ENCODE measurements at regions of chr5 and their contacts with region 1.

Region 1: DNA sequence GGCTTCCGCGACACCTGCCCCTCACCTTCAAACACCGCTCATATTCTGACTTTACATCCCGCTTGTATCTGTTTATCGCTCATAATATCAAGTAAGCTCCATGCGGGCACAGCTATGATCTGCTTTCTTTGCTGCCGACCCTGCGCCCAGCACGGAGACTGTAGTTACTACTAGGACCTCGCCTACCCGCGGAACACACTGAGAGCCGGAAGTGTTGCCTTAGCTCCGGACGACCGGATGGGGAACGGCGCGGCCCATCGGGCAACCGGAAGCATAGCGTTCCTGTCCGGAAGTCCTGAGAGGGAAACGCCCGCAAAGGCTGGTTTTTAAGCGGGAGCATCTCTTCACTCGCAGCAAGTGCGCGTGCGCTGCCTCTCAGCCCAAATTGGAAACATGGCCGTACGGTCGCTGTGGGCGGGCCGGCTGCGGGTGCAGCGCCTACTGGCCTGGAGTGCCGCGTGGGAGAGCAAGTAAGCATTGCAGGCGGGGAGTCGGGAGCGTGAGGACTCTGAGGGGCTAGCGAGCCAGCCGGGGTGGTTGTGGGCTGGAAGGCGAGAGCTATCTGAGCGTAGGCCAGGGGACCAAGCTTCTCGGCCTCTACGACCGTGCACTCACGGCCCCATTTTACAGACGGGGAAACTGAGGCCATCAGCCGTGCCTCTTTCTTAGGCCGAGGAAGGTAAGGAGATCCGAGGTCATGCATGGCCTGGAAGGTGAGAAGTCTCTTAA is at the start of gene GRPEL2:
- DNase-seq: peak; percentile 79
- ATAC-seq: peak; percentile 91
- H3K4me3 Mint-ChIP-seq: peak within 1 kb of the TSS; percentile 97
- H3K27ac Mint-ChIP-seq: peak within 1 kb of the TSS; percentile 97
- H3K4me1 Mint-ChIP-seq: peaks cover 34% of the 10 kb centered on the region
- H3K27me3 Mint-ChIP-seq: no peaks in the 10 kb centered on the region
- CTCF ChIP-seq: no peak
- total RNA-seq, gene GRPEL2: 13.2 and 14.0 TPM in 2 replicates

Region 2: DNA sequence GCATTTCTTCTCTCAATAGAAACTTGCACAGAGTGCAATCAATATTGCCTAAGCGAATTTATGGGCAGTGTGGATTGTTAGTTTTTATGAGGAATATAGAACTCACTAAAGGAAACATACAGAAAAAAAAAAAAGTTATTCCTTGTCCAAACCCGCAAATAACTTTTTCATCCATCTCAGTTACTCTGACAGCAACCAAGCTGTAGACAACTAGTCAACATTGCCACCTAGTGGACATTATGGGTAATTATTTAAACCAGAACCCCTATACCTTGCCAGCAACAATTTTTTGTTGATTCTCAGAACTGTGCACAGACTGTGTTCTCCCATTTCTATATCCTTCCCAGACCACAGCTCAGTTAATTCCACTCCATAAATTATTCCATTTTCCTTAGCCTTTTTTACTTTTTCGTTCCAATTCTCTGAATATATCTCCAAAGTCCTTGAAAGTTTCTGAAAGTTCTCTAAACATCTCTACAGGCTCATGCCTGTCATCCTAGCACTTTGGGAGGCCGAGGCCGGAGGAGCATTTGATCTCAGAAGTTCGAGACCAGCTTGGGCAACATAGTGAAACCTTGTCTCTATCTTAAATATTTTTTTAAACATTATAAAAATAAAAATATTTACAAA is 76.3 kb before region 1 on chr5:
- CTCF ChIA-PET with region 1: no interaction called
- POLR2A ChIA-PET with region 1: no interaction called
- intact Hi-C with region 1: loop called (anchors 5 kb)
- DNase-seq: no peak
- ATAC-seq: peak; percentile 30
- H3K4me3 Mint-ChIP-seq: peak overlapping the region; percentile 4
- H3K27ac Mint-ChIP-seq: peak overlapping the region; percentile 32
- H3K4me1 Mint-ChIP-seq: peaks cover 15% of the 10 kb centered on the region
- H3K27me3 Mint-ChIP-seq: peaks cover 51% of the 10 kb centered on the region
- CTCF ChIP-seq: peak; percentile 69

Region 3: DNA sequence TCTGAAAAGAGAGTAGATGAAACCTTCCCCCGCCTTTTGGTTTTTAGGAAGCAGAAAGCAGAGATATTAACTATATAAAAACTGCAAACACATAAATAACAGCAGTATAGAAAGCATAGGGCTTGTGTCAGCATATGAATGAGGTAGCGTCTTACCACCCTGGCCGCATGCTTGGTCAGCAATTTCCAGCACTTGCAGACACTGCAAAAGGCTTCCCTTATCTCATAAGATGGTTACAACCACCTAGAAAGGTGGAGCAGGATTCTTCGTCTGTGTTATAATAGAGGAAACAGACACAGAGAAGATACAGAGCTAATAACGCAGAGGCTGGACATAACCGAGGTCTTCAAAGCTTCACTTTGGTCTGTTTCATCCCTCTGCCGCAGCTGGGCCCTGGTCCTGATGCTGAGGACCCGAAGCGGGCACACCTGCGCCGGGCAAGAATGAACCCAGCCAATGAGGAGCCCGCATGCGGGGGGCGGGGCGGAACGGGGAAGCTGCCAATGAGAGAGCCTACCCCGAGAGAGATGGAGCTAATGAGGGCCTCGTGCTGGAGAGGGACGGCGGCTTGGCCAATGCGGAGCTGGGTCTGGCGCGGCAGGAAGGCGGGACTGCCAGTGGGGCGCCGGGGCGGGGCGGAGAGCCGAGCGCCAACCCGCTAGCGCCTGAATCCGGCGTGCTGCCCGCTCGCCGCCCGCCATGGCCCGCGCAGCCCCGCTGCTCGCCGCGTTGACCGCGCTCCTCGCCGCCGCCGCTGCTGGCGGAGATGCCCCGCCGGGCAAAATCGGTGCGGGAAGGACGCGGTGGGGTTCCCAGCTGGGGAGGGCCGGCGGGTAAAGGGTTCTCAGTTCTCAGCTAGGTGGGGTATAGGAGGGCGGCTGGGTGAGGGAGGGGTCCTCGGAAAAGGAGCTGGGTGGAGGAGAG is 12.3 kb after region 1 on chr5 and contains the start of gene PCYOX1L:
- CTCF ChIA-PET with region 1: interaction called, 4 read pairs
- POLR2A ChIA-PET with region 1: interaction called, 61 read pairs
- intact Hi-C with region 1: loop called (anchors 1 kb)
- DNase-seq: peak; percentile 84
- ATAC-seq: peak; percentile 100
- H3K4me3 Mint-ChIP-seq: peak within 1 kb of the TSS; percentile 92
- H3K27ac Mint-ChIP-seq: peak within 1 kb of the TSS; percentile 65
- H3K4me1 Mint-ChIP-seq: peaks cover 16% of the 10 kb centered on the region
- H3K27me3 Mint-ChIP-seq: no peaks in the 10 kb centered on the region
- CTCF ChIP-seq: no peak
- total RNA-seq, gene PCYOX1L: 6.1 and 9.2 TPM in 2 replicates

Region 4: DNA sequence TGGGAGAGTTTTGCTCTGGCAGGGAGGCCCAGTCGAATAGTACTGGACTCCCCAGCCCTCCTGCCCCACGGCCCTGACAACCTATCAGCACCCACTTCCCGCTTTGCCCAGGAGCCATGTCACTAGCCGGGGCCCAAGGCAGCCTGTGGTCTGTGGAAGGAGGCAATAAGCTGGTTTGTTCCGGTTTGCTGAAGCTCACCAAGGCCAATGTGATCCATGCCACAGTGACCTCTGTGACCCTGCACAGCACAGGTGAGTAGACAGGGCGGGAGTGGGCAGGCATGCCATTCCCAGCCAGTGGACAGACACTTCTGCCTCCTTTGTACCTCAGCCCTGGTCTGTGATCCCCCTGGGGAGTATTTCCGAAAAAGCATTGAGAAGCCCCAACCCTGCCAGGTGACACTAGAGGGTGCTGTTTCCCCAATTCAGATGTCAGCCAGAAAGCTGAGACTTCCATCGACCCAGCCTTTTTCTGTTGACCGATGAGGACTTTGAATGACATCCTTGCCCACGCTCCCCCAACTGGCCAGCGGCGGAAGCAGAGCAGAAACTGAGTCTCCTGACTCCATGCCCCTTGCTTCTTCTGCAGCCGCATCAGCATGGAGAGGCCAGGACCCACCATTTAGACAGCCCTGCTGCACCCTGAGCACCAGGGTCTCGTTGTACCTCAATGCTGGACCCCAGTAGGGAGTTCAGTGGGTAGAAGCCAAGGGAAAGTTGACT is 22.1 kb after region 1 on chr5:
- CTCF ChIA-PET with region 1: interaction called, 12 read pairs
- POLR2A ChIA-PET with region 1: interaction called, 3 read pairs
- intact Hi-C with region 1: no loop called
- DNase-seq: peak; percentile 29
- ATAC-seq: peak; percentile 85
- H3K4me3 Mint-ChIP-seq: no peak overlapping the region
- H3K27ac Mint-ChIP-seq: no peak overlapping the region
- H3K4me1 Mint-ChIP-seq: peaks cover 5% of the 10 kb centered on the region
- H3K27me3 Mint-ChIP-seq: no peaks in the 10 kb centered on the region
- CTCF ChIP-seq: peak; percentile 40

Measured in activated B cell treated with CpG ODN at 0.5 μM for 24 hours (primary cell).